ENCODE measurements at regions of chr6 and their contacts with region 1.

Region 1: GRCh38 chr6:6547110-6547879 is 41.2 kb upstream of the LY86 start:
- DNase-seq: peak; percentile 75
- ATAC-seq: peak; percentile 93
- H3K4me3 Mint-ChIP-seq: peak overlapping the region; percentile 78
- H3K27ac Mint-ChIP-seq: no peak overlapping the region
- H3K4me1 Mint-ChIP-seq: peaks cover 11% of the 10 kb centered on the region
- H3K27me3 Mint-ChIP-seq: peaks cover 26% of the 10 kb centered on the region
- CTCF ChIP-seq: peak; percentile 98

Region 2: GRCh38 chr6:5471044-5471443 is 1076.3 kb before region 1 on chr6:
- CTCF ChIA-PET with region 1: interaction called, 26 read pairs
- POLR2A ChIA-PET with region 1: no interaction called
- intact Hi-C with region 1: loop called (anchors 1 kb)
- DNase-seq: peak; percentile 24
- ATAC-seq: peak; percentile 70
- H3K4me3 Mint-ChIP-seq: no peak overlapping the region
- H3K27ac Mint-ChIP-seq: no peak overlapping the region
- H3K4me1 Mint-ChIP-seq: no peaks in the 10 kb centered on the region
- H3K27me3 Mint-ChIP-seq: no peaks in the 10 kb centered on the region
- CTCF ChIP-seq: no peak

Region 3: GRCh38 chr6:5878792-5879191 is 668.5 kb before region 1 on chr6:
- CTCF ChIA-PET with region 1: no interaction called
- POLR2A ChIA-PET with region 1: no interaction called
- intact Hi-C with region 1: no loop called
- DNase-seq: no peak
- ATAC-seq: no peak
- H3K4me3 Mint-ChIP-seq: no peak overlapping the region
- H3K27ac Mint-ChIP-seq: no peak overlapping the region
- H3K4me1 Mint-ChIP-seq: no peaks in the 10 kb centered on the region
- H3K27me3 Mint-ChIP-seq: no peaks in the 10 kb centered on the region
- CTCF ChIP-seq: no peak

Region 4: GRCh38 chr6:5937169-5937909 is 610.0 kb before region 1 on chr6:
- CTCF ChIA-PET with region 1: no interaction called
- POLR2A ChIA-PET with region 1: no interaction called
- intact Hi-C with region 1: no loop called
- DNase-seq: no peak
- ATAC-seq: no peak
- H3K4me3 Mint-ChIP-seq: no peak overlapping the region
- H3K27ac Mint-ChIP-seq: no peak overlapping the region
- H3K4me1 Mint-ChIP-seq: no peaks in the 10 kb centered on the region
- H3K27me3 Mint-ChIP-seq: peaks cover 33% of the 10 kb centered on the region
- CTCF ChIP-seq: no peak

Region 5: GRCh38 chr6:6008648-6009421 is 538.5 kb before region 1 on chr6:
- CTCF ChIA-PET with region 1: interaction called, 5 read pairs
- POLR2A ChIA-PET with region 1: interaction called, 4 read pairs
- intact Hi-C with region 1: loop called (anchors 2 kb)
- DNase-seq: peak; percentile 36
- ATAC-seq: peak; percentile 65
- H3K4me3 Mint-ChIP-seq: peak overlapping the region; percentile 78
- H3K27ac Mint-ChIP-seq: no peak overlapping the region
- H3K4me1 Mint-ChIP-seq: peaks cover 38% of the 10 kb centered on the region
- H3K27me3 Mint-ChIP-seq: peaks cover 57% of the 10 kb centered on the region
- CTCF ChIP-seq: no peak

Region 6: DNA sequence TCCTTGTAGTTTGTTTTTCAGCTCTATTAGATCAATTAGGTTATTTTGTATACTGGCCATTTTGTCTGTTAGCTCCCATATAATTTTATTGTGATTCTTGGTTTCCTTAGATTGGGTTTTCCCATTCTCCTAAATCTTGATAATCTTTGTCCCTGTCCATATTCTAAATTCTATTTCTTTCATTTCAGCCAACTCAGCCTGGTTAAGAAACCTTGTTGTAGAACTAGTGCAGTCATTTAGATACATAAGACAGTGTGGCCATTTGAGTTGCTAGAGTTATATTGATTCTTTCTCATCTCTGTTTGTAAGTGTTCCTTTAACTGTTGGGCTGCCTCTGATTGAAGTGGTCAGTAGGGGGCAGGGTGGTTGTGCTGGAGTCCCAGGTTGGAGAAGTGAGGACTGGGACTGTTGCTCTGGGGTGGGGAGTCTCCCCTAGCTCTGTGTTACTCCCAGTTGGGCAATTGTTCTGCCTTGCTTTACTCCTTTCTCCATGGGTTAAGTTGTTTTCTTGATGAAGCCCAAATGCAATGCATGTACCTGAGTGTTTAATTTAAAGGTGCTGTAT is 441.7 kb before region 1 on chr6:
- CTCF ChIA-PET with region 1: interaction called, 9 read pairs
- POLR2A ChIA-PET with region 1: no interaction called
- intact Hi-C with region 1: loop called (anchors 1 kb)
- DNase-seq: no peak
- ATAC-seq: peak; percentile 31
- H3K4me3 Mint-ChIP-seq: no peak overlapping the region
- H3K27ac Mint-ChIP-seq: no peak overlapping the region
- H3K4me1 Mint-ChIP-seq: no peaks in the 10 kb centered on the region
- H3K27me3 Mint-ChIP-seq: peaks cover 35% of the 10 kb centered on the region
- CTCF ChIP-seq: no peak

Region 7: DNA sequence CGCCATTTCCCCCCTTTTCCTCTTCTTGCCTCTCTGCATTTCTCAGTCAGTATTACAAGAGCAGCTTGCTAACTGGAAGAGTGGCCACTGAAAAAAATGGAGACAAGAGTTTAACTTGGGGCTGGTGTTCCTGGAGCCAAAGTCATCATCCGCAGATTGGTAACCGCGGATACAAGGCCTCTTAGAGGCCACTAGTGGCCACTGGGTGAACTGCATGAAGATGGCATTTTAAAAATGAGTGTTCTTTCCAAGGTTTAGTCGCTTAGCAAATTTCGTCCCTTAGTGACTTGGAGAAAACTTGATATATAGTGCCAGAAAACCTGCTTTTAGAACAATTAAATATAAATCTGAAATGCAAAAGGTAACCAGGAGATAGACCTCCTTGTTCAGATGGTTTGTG is 231.6 kb before region 1 on chr6:
- CTCF ChIA-PET with region 1: interaction called, 3 read pairs
- POLR2A ChIA-PET with region 1: no interaction called
- intact Hi-C with region 1: loop called (anchors 2 kb)
- DNase-seq: no peak
- ATAC-seq: peak; percentile 35
- H3K4me3 Mint-ChIP-seq: no peak overlapping the region
- H3K27ac Mint-ChIP-seq: no peak overlapping the region
- H3K4me1 Mint-ChIP-seq: peaks cover 19% of the 10 kb centered on the region
- H3K27me3 Mint-ChIP-seq: peaks cover 29% of the 10 kb centered on the region
- CTCF ChIP-seq: peak; percentile 63

Region 8: DNA sequence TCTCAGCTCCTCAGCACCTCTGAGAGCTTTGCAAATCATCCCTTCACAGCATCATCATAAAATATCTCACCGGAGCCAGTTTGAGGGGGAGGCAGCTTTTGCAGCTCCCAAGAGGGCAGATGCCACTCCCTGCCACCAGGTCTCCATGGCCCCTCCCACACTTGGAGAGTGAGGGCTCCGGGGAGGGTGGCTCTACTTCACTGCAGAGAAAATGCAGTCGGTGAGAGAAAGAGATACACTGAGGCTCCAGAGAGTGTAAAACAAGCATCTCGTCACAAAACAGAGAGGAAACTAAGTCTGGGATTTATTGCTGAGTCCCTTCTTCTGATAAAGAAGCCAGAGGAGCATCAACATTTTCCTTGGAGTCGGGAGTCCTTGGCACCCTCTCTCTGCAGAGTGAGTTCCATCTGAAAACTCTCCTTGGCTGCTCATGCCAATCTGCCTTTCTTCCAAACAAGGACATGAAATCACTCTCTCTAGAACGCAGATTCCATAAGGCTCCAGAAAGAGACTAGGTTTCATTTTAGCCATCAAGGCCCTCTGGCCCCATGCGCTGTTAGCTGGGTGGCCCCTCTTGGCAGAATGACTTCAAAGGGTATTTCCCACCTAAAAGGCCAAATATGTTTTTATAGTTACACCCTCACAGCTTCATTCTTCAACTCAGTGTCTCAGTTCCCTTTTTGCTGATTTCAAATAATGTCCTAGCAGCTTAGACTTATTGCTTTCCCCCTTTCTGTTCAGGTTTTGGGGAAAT is 156.3 kb before region 1 on chr6:
- CTCF ChIA-PET with region 1: no interaction called
- POLR2A ChIA-PET with region 1: no interaction called
- intact Hi-C with region 1: loop called (anchors 1 kb)
- DNase-seq: peak; percentile 42
- ATAC-seq: peak; percentile 78
- H3K4me3 Mint-ChIP-seq: peak overlapping the region; percentile 77
- H3K27ac Mint-ChIP-seq: peak overlapping the region; percentile 96
- H3K4me1 Mint-ChIP-seq: peaks cover 63% of the 10 kb centered on the region
- H3K27me3 Mint-ChIP-seq: peaks cover 2% of the 10 kb centered on the region
- CTCF ChIP-seq: no peak

Measured in activated B cell treated with CpG ODN at 0.5 μM for 24 hours (primary cell).